ENCODE measurements at regions of chr2 and their contacts with region 1.

Region 1: GRCh38 chr2:20350753-20351554 is at the start of gene PUM2:
- DNase-seq: peak; percentile 97
- H3K4me3 ChIP-seq: peak within 1 kb of the TSS; percentile 82
- H3K27ac ChIP-seq: peak within 1 kb of the TSS; percentile 91
- H3K4me1 ChIP-seq: peaks cover 43% of the 10 kb centered on the region
- CTCF ChIP-seq: 0 out of 2 replicates have a peak, but pooled peaks have one; percentile 21
- total RNA-seq, gene PUM2: 40.4 and 48.2 TPM in 2 replicates

Region 2: DNA sequence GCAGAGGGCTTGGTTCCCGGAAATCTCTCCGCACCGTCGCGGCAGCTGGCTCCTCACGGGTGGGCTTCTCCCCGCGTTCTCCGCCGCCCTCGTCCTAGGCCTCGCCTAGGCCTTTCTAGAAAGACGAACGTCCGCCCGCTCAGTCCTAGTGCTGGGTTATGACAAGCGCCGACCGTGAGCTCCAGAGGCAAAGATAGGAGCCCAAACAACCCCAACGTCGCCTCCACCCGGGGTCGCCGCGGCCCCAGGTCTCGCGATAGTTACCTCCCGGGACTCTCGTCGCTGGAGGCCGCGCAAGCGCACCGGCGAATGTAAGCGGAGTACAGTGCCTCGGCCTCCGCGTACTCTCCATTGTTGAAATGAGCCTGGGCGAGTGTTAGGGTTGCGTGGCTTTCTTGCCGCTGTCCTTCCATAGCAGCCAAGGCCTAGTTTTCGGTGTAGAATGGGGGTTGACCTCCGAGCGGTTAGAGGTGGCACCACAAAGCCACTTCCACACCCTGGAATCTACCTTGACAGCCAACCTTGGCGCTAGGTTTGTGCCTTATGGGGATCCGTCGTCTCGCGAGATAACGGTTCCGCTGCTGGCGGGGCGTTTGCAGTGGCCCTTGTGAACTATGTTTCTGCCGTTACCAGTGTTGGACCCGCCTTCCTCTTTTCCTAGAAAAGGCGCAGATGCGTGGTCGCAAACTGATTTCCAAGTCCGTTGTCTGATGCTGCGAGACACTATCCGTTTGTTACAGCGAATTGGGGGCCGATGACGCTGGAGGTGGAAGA is 449.3 kb before region 1 on chr2 and contains the start of gene TTC32:
- CTCF ChIA-PET with region 1: no interaction called
- POLR2A ChIA-PET with region 1: no interaction called
- intact Hi-C with region 1: loop called (anchors 2 kb)
- DNase-seq: peak; percentile 94
- H3K4me3 ChIP-seq: peak within 1 kb of the TSS; percentile 89
- H3K27ac ChIP-seq: peak within 1 kb of the TSS; percentile 82
- H3K4me1 ChIP-seq: peaks cover 25% of the 10 kb centered on the region
- CTCF ChIP-seq: no peak
- total RNA-seq, gene TTC32: 16.3 and 21.1 TPM in 2 replicates

Region 3: GRCh38 chr2:20051532-20052228 is 299.3 kb before region 1 on chr2 and contains the start of gene LAPTM4A:
- CTCF ChIA-PET with region 1: no interaction called
- POLR2A ChIA-PET with region 1: interaction called, 3 read pairs
- intact Hi-C with region 1: loop called (anchors 2 kb)
- DNase-seq: peak; percentile 99
- H3K4me3 ChIP-seq: peak within 1 kb of the TSS; percentile 89
- H3K27ac ChIP-seq: peak within 1 kb of the TSS; percentile 74
- H3K4me1 ChIP-seq: peaks cover 27% of the 10 kb centered on the region
- CTCF ChIP-seq: no peak
- total RNA-seq, gene LAPTM4A: 6.5 and 8.4 TPM in 2 replicates

Region 4: DNA sequence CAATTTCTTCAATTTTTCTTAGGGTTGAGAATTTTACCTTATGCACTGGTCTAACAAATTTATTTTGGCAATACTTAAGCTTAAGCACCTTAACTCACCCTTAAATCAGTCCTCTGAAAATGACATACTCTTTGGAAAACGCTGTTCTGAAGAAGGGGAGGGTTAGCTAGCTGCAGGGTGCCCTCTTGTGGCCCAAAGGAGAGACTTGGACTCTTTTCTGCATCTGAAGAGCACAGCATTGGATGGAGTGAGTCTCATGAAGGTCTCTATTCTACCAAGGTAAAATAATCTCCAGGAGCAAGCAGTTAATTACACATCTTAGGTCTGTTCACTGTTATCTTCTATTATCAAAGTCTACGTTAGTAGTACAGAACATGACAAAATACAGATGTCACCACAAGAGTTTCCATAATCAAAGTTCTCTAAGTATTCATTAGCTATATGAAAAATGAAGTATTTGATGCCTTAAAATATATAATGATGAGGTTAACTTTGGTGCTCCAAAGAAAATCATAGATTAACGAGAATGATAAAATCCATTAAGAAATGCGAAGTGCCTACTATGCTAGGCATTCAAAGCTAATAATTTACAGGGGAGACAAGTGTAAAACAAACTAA is 24.7 kb before region 1 on chr2:
- CTCF ChIA-PET with region 1: interaction called, 3 read pairs
- POLR2A ChIA-PET with region 1: interaction called, 13 read pairs
- intact Hi-C with region 1: no loop called
- DNase-seq: peak; percentile 62
- H3K4me3 ChIP-seq: no peak overlapping the region
- H3K27ac ChIP-seq: no peak overlapping the region
- H3K4me1 ChIP-seq: peaks cover 17% of the 10 kb centered on the region
- CTCF ChIP-seq: peak; percentile 96

Region 5: GRCh38 chr2:20333738-20334137 is 17.2 kb before region 1 on chr2:
- CTCF ChIA-PET with region 1: no interaction called
- POLR2A ChIA-PET with region 1: interaction called, 10 read pairs
- intact Hi-C with region 1: no loop called
- DNase-seq: no peak
- H3K4me3 ChIP-seq: no peak overlapping the region
- H3K27ac ChIP-seq: no peak overlapping the region
- H3K4me1 ChIP-seq: peaks cover 14% of the 10 kb centered on the region
- CTCF ChIP-seq: no peak

Region 6: DNA sequence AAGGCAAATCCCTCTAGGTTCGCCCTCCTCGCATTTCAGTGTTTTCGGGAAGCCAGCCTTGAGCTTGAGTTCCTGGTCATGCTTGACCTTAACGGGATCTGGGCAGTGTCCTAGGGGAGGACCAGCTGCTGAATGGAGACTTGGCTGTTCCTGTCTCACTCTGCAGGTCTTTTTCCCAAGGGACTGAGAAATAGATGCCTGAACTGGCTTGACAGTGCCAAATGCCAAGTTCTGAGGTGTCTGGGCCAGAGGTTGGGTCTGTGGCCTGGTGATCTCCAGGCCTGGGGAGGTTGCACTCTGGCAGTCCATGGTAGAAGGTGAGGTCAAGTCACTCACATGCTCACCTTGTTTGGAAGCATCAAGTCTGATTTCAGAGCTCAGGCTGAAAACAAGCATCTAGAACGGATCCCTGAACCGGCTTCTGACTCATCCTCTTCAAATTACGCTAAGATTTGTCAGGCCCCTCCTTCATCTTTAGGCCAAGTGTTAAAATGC is 115.5 kb after region 1 on chr2:
- CTCF ChIA-PET with region 1: no interaction called
- POLR2A ChIA-PET with region 1: no interaction called
- intact Hi-C with region 1: no loop called
- DNase-seq: no peak
- H3K4me3 ChIP-seq: no peak overlapping the region
- H3K27ac ChIP-seq: no peak overlapping the region
- H3K4me1 ChIP-seq: no peaks in the 10 kb centered on the region
- CTCF ChIP-seq: no peak

Region 7: GRCh38 chr2:20561701-20562454 is 210.9 kb after region 1 on chr2:
- CTCF ChIA-PET with region 1: no interaction called
- POLR2A ChIA-PET with region 1: no interaction called
- intact Hi-C with region 1: no loop called
- DNase-seq: no peak
- H3K4me3 ChIP-seq: no peak overlapping the region
- H3K27ac ChIP-seq: no peak overlapping the region
- H3K4me1 ChIP-seq: no peaks in the 10 kb centered on the region
- CTCF ChIP-seq: no peak

Region 8: GRCh38 chr2:20595431-20596192 is 244.7 kb after region 1 on chr2:
- CTCF ChIA-PET with region 1: no interaction called
- POLR2A ChIA-PET with region 1: no interaction called
- intact Hi-C with region 1: loop called (anchors 1 kb)
- DNase-seq: peak; percentile 82
- H3K4me3 ChIP-seq: peak overlapping the region; percentile 36
- H3K27ac ChIP-seq: peak overlapping the region; percentile 42
- H3K4me1 ChIP-seq: peaks cover 36% of the 10 kb centered on the region
- CTCF ChIP-seq: no peak

Measured in OCI-LY7 (cell line).